Activated T-helper 2 cell treated with anti-CD3 and anti-CD28 coated beads, Interferon-gamma antibody, Interleukin-2, Interleukin-4, amounts not matched to agents 10 μg/mL and 5 μg/mL and 100 μg/mL, durations not matched to agents 14 hours and 24 hours and 36 hours (primary cell): ENCODE measurements at regions of chr14 and their contacts with region 1.

Region 1: DNA sequence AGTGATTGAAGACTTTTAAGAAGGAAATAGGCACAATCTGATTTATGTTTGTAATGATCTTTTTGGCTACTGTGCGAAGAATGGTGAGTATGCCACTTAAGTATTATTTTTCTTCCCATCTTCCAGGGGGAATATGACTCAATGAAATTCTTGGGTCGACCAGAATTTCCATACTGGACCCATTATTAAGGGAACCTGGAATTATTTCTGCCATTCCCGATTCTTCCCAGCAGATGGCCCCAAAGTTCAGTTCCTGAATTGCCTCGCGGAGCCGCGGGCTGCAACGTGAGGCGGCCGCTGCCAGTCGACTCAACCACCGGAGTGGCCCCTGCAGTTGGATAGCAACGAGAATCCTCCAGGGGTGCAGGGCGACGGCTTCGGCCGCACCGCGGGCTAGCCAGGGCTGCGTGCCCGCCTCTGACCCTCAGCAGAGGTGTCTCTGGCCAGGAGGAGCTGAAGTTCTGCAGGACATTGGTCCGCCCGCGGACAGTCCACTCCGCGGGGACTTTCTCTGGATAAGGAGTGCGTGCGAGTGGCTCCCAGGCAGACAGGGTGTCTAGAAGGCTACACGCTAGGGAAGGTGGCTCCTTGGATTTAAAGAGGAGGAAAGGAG is 628 bp upstream of the TSHR start:
- DNase-seq: peak; percentile 63
- H3K4me3 Mint-ChIP-seq: peak overlapping the region; percentile 84
- H3K27ac Mint-ChIP-seq: peak overlapping the region; percentile 1
- H3K4me1 Mint-ChIP-seq: peaks cover 49% of the 10 kb centered on the region
- H3K27me3 Mint-ChIP-seq: peaks cover 46% of the 10 kb centered on the region

Region 2: DNA sequence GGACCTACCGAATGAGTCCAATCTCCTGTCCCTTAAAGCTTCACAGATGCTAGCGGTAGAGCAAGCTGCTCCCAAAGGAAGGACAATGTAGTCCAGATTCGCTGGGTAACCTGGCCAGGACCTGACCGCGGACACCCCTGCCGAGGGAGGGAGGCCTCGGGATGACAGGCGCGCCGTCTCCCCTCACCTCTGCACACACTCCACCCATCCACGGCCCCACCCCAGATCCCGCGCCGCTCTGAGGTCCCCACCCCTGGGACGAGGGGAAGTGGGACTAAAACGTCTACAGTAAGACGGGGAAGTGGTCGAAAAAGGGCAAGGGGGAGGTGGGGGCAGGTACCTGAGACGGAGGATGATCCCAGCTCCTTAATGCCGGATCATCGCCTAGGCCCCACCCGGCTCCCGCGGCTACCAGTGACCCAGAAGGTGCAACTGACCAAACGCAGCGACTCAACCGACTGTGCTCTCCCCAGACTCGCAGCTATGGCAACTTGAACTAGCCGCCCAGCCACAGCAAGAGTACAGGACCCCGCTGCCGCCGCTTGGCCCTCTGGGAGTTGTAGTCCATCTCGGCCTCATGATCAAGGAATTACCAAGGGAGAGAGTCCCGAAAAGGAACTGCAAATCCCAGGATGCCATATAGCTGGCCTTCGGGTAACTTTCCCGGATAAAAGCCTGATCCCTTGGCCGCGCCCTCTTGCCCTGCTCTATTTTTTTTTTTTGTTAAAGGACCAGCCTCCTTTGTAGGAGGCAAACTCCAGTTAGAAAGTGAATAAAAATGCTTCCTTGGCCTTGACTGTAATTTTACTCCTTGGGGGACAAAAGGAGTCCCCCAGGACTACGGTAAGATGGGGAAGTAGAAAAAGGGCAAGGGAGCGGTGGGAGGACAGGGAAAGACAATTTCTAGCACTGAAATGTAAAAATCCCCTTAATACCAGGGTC is 13.3 kb before region 1 on chr14 and contains the start of gene CEP128:
- intact Hi-C with region 1: loop called (anchors 1 kb)
- DNase-seq: peak; percentile 79
- H3K4me3 Mint-ChIP-seq: peak within 1 kb of the TSS; percentile 87
- H3K27ac Mint-ChIP-seq: peak within 1 kb of the TSS; percentile 70
- H3K4me1 Mint-ChIP-seq: peaks cover 33% of the 10 kb centered on the region
- H3K27me3 Mint-ChIP-seq: peaks cover 2% of the 10 kb centered on the region
- total RNA-seq, gene CEP128: 18.0 and 20.7 TPM in 2 replicates

Region 3: GRCh38 chr14:80987235-80988032 is 32.6 kb after region 1 on chr14:
- intact Hi-C with region 1: loop called (anchors 1 kb)
- DNase-seq: peak; percentile 44
- H3K4me3 Mint-ChIP-seq: no peak overlapping the region
- H3K27ac Mint-ChIP-seq: no peak overlapping the region
- H3K4me1 Mint-ChIP-seq: peaks cover 11% of the 10 kb centered on the region
- H3K27me3 Mint-ChIP-seq: peaks cover 10% of the 10 kb centered on the region

Region 4: DNA sequence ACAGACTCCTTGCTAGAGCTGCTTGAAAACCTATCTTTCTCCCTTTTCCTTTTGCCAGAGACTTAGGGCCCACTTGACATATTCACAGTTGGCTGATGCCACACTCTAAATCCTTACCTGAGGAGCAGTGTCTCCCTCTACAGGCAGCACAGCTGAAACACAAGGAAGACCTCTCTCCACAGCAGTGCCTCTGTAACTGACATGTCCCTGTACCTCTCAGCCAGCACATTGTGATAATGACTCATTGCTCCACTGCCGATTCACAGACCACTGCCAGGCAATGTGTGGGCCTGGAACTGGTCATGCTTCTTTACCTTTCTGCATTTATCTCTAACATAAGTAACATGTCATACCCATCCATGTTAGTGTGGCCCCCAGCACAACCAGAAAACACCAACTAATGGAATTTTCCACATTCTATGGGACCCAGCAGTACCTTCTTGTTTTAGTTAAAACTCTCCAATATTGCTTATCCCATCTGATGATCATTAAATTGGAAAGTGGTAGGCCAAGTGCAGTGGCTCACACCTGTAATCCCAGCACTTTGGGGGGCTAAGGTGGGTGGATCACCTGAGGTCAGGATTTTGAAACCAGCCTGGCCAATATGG is 209.5 kb after region 1 on chr14:
- intact Hi-C with region 1: loop called (anchors 1 kb)
- DNase-seq: peak; percentile 37
- H3K4me3 Mint-ChIP-seq: no peak overlapping the region
- H3K27ac Mint-ChIP-seq: no peak overlapping the region
- H3K4me1 Mint-ChIP-seq: peaks cover 27% of the 10 kb centered on the region
- H3K27me3 Mint-ChIP-seq: no peaks in the 10 kb centered on the region

Region 5: GRCh38 chr14:81220830-81221578 is 266.2 kb after region 1 on chr14 and contains the start of gene GTF2A1:
- intact Hi-C with region 1: loop called (anchors 2 kb)
- DNase-seq: peak; percentile 95
- H3K4me3 Mint-ChIP-seq: peak within 1 kb of the TSS; percentile 100
- H3K27ac Mint-ChIP-seq: peak within 1 kb of the TSS; percentile 100
- H3K4me1 Mint-ChIP-seq: peaks cover 30% of the 10 kb centered on the region
- H3K27me3 Mint-ChIP-seq: peaks cover 2% of the 10 kb centered on the region
- total RNA-seq, gene GTF2A1: 41.2 and 45.1 TPM in 2 replicates

Region 6: GRCh38 chr14:81246461-81247145 is 291.8 kb after region 1 on chr14:
- intact Hi-C with region 1: no loop called
- DNase-seq: no peak
- H3K4me3 Mint-ChIP-seq: no peak overlapping the region
- H3K27ac Mint-ChIP-seq: no peak overlapping the region
- H3K4me1 Mint-ChIP-seq: no peaks in the 10 kb centered on the region
- H3K27me3 Mint-ChIP-seq: peaks cover 2% of the 10 kb centered on the region

Region 7: GRCh38 chr14:81633496-81633895 is 678.7 kb after region 1 on chr14:
- intact Hi-C with region 1: no loop called
- DNase-seq: no peak
- H3K4me3 Mint-ChIP-seq: no peak overlapping the region
- H3K27ac Mint-ChIP-seq: no peak overlapping the region
- H3K4me1 Mint-ChIP-seq: no peaks in the 10 kb centered on the region
- H3K27me3 Mint-ChIP-seq: no peaks in the 10 kb centered on the region